GM12878 (cell line): ENCODE measurements at regions of chr9 and their contacts with region 1.

Region 1: DNA sequence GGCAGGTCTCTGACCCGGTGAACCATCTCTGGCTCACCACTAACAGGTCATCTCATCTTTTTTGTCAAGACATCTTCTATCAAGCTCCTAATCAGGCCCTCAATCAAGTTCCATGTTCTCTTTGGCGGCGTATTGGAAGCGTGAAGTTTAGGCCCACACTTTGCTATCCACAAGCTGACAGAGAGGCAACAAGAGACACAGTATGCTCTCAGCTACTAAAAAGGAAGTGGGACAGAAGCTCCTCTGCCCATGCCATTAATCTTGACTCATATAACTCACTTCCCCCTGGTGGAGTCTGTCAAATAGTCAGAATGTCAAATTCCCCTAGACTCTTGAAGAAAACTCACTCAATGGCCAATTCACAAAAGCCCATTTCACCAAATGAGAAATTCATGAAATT is 77.6 kb upstream of the TMC1 start:
- DNase-seq: peak; percentile 85
- ATAC-seq: peak; percentile 97
- H3K4me3 ChIP-seq: no peak overlapping the region
- H3K27ac ChIP-seq: peak overlapping the region; percentile 79; the same call in 1 of the 2 replicates
- H3K4me1 ChIP-seq: peaks cover 15% of the 10 kb centered on the region
- H3K27me3 ChIP-seq: no peaks in the 10 kb centered on the region
- CTCF ChIP-seq: peak in 1 of 3 experiments; percentile 21; a peak in 2 of 6 replicates
- EP300 ChIP-seq: peak; percentile 61 to 88
- POLR2A ChIP-seq: no peak
- RAD21 ChIP-seq: peak; percentile 49

Region 2: DNA sequence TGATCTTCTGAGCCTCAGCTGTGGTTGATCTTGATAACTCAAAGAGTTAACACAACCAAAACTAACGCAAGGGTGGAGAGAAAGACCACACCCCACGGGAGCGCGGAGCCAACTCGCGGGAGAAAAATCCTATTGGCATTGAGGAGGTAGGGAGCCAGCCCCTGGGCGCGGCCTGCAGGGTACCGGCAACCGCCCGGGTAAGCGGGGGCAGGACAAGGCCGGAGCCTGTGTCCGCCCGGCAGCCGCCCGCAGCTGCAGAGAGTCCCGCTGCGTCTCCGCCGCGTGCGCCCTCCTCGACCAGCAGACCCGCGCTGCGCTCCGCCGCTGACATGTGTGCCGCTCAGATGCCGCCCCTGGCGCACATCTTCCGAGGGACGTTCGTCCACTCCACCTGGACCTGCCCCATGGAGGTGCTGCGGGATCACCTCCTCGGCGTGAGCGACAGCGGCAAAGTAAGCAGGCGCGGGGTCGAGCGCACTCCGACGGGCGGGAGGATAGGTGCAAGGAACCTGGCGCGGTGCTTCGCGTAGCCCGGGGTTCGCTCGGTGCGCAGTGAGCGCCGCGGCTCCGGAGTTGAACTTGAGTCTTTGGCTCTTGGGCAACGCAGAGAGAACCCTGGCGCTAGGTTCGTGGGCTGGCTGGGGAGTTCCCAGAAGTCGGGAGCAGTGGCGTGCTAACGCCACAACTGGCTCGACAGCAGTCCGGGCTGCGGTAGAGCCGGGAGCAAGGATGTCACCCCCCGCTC is 294.5 kb before region 1 on chr9 and contains the start of gene GDA:
- CTCF ChIA-PET with region 1: no interaction called
- POLR2A ChIA-PET with region 1: no interaction called
- RAD21 ChIA-PET with region 1: no interaction called
- SMC1A ChIA-PET with region 1: no interaction called
- in situ Hi-C with region 1: no loop called
- intact Hi-C with region 1: no loop called
- DNase-seq: no peak
- ATAC-seq: peak; percentile 41
- H3K4me3 ChIP-seq: no peak within 1 kb of the TSS
- H3K27ac ChIP-seq: no peak within 1 kb of the TSS
- H3K4me1 ChIP-seq: no peaks in the 10 kb centered on the region; the same call in 1 of the 2 replicates
- H3K27me3 ChIP-seq: peaks cover 2 to 3% of the 10 kb centered on the region in 2 experiments; a peak in 2 of 4 replicates
- CTCF ChIP-seq: no peak
- EP300 ChIP-seq: no peak
- POLR2A ChIP-seq: no peak
- RAD21 ChIP-seq: no peak
- polyA plus RNA-seq, gene GDA: 0.23 to 0.49 TPM

Region 3: DNA sequence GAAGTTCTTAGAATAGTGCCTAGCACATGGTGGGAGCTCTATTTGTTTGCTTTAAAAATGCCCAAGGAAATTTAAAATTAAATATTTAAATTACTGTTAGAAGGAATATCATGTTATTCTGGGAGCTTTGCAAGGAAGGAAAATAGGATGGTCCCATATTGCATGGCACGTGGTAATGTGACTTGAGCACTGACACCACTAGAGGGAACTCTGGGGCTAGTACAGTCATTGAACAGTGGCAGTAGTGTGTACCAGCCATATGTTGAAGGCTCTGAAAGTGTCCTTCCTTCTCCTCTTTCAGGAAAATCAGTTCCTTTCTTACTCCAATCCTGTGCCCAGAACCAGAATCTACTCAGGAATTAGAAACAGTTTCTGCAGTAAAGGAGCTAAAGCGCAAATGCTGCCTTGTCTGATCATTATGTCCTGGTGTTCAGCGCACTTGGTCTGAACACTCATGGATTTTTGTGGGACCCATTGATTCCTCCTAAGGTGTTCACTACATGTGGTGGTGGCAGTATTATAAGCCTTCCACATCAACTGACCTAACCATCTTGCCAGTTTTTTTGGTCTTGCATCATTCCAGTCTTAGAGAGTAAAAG is 240.6 kb before region 1 on chr9:
- CTCF ChIA-PET with region 1: no interaction called
- POLR2A ChIA-PET with region 1: no interaction called
- RAD21 ChIA-PET with region 1: interaction called, 6 read pairs
- SMC1A ChIA-PET with region 1: no interaction called
- in situ Hi-C with region 1: no loop called
- intact Hi-C with region 1: loop called (anchors 10 kb)
- DNase-seq: no peak
- ATAC-seq: peak; percentile 76
- H3K4me3 ChIP-seq: no peak overlapping the region
- H3K27ac ChIP-seq: no peak overlapping the region
- H3K4me1 ChIP-seq: peaks cover 4% of the 10 kb centered on the region
- H3K27me3 ChIP-seq: no peaks in the 10 kb centered on the region
- CTCF ChIP-seq: peak; percentile 62 to 71 (median 71)
- EP300 ChIP-seq: no peak
- POLR2A ChIP-seq: no peak
- RAD21 ChIP-seq: peak; percentile 51

Region 4: DNA sequence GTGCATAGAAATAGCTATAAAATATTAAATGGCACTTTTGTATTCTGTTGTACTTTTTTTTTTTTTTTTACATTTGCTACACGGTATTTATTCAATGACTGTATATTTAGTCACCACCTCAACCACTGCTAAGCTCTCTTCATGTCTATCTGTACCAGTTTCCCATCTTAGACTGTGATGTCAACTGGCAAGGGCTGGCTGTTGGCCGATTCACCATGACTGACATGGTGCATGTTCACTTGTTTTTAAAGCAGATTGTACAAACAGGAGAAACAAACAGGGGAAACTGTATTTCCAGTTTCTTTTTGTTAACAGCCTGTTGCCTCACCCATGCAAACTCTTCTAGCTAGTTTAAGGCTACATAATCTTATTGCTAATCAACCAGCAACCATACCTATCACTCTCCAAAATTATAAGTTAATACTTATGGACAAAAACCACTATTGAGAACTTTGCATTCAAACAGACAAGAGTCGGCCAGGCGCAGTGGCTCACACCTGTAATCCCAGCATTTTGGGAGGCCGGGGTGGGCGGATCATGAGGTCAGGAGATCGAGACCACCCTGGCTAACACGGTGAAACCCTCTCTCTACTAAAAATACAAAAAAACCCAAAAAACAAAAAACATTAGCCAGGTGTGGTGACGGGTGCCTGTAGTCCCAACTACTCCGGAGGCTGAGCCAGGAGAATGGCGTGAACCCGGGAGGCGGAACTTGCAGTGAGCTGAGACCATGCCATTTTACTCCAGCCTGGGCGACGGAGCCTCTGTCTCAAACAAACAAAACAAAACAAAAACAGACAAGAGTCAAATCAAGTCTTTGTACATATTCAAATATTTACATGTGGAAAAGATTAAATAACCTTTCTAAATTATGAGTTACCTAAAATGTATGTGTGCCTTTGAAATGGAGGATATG is 92.1 kb before region 1 on chr9:
- CTCF ChIA-PET with region 1: no interaction called
- POLR2A ChIA-PET with region 1: no interaction called
- RAD21 ChIA-PET with region 1: no interaction called
- SMC1A ChIA-PET with region 1: no interaction called
- in situ Hi-C with region 1: no loop called
- intact Hi-C with region 1: no loop called
- DNase-seq: no peak
- ATAC-seq: 0 out of 3 replicates have a peak, but pooled peaks have one; percentile 10
- H3K4me3 ChIP-seq: no peak overlapping the region
- H3K27ac ChIP-seq: no peak overlapping the region
- H3K4me1 ChIP-seq: no peaks in the 10 kb centered on the region
- H3K27me3 ChIP-seq: no peaks in the 10 kb centered on the region
- CTCF ChIP-seq: no peak
- EP300 ChIP-seq: no peak
- POLR2A ChIP-seq: no peak
- RAD21 ChIP-seq: no peak

Region 5: GRCh38 chr9:72364679-72365524 is 79.0 kb before region 1 on chr9 and contains the start of gene ZFAND5:
- CTCF ChIA-PET with region 1: interaction called, 9 read pairs
- POLR2A ChIA-PET with region 1: interaction called, 8 read pairs
- RAD21 ChIA-PET with region 1: interaction called, 14 read pairs
- SMC1A ChIA-PET with region 1: interaction called, 7 read pairs
- in situ Hi-C with region 1: no loop called
- intact Hi-C with region 1: loop called (anchors 1 kb)
- DNase-seq: peak; percentile 57
- ATAC-seq: peak; percentile 88
- H3K4me3 ChIP-seq: peak within 1 kb of the TSS; percentile 91
- H3K27ac ChIP-seq: peak within 1 kb of the TSS; percentile 80
- H3K4me1 ChIP-seq: peaks cover 4% of the 10 kb centered on the region
- H3K27me3 ChIP-seq: no peaks in the 10 kb centered on the region
- CTCF ChIP-seq: peak in 1 of 3 experiments; percentile 27; a peak in 1 of 6 replicates
- EP300 ChIP-seq: peak in 1 of 2 experiments; percentile 44; a peak in 2 of 4 replicates
- POLR2A ChIP-seq: peak; percentile 97
- RAD21 ChIP-seq: peak; percentile 20; the same call in 1 of the 2 replicates
- polyA plus RNA-seq, gene ZFAND5: 22.5 to 32.3 TPM

Region 6: DNA sequence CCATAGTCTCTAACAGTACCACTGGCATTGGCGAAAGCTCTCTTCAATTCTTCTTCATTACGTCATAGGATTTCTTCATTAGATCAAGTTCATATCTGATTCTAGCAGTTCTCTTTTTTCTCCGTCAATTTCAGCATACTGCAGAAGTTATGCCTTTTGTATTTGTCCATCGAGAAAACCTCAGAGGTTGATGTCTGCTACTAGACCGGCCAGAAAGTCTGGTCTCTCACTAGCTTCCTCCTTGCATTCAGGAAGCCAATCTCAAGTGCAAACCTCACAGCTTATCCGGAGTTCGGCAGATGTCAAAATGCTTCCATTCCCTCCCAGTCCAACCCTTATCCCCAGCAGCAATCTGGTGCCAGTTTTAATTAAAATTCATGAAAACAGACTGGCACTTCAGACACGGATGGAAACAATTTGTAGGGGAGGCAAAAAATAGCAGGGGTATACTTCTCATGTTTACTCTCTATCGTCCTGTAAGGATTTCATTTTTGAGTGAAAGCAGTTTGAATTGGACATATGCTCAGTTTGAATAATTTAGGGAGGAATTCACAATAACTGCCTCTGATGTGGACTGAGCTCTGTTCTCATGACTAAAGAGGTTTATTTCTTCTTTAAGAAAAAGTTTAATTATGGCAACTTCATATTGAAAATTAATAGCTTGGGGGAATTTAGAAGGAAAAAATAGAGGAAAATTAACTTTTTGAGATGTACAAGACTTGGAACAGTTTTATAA is 21.2 kb after region 1 on chr9:
- CTCF ChIA-PET with region 1: interaction called, 46 read pairs
- POLR2A ChIA-PET with region 1: interaction called, 8 read pairs
- RAD21 ChIA-PET with region 1: interaction called, 43 read pairs
- SMC1A ChIA-PET with region 1: interaction called, 73 read pairs
- in situ Hi-C with region 1: no loop called
- intact Hi-C with region 1: no loop called
- DNase-seq: no peak
- ATAC-seq: peak; percentile 21; the same call in 2 of the 3 replicates
- H3K4me3 ChIP-seq: no peak overlapping the region
- H3K27ac ChIP-seq: no peak overlapping the region
- H3K4me1 ChIP-seq: no peaks in the 10 kb centered on the region
- H3K27me3 ChIP-seq: no peaks in the 10 kb centered on the region
- CTCF ChIP-seq: no peak
- EP300 ChIP-seq: no peak
- POLR2A ChIP-seq: no peak
- RAD21 ChIP-seq: no peak

Region 7: DNA sequence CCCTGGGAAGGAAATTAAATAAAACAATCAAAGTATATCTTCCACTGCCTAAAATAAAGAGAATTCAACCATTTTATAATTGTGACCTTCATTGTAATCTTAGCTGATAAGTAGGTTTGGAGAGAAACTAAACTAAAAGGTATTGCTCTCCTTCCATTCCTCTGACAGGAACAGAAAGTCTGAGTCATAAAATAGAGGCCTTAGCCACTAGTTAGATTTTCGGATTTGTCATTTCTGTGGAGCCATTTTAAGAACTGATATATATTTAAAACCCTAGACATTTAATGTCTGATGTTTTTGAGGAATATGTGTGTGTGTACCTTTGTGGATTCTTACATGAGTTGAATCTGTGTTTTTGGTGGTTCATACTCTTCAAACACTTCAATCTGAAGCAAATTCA is 65.8 kb after region 1 on chr9:
- CTCF ChIA-PET with region 1: interaction called, 5 read pairs
- POLR2A ChIA-PET with region 1: interaction called, 5 read pairs
- RAD21 ChIA-PET with region 1: interaction called, 30 read pairs
- SMC1A ChIA-PET with region 1: interaction called, 21 read pairs
- in situ Hi-C with region 1: no loop called
- intact Hi-C with region 1: loop called (anchors 5 kb)
- DNase-seq: peak; percentile 51
- ATAC-seq: peak; percentile 96
- H3K4me3 ChIP-seq: no peak overlapping the region
- H3K27ac ChIP-seq: peak overlapping the region; percentile 88
- H3K4me1 ChIP-seq: peaks cover 14% of the 10 kb centered on the region
- H3K27me3 ChIP-seq: no peaks in the 10 kb centered on the region
- CTCF ChIP-seq: no peak
- EP300 ChIP-seq: peak in 1 of 2 experiments; percentile 45; a peak in 1 of 4 replicates
- POLR2A ChIP-seq: no peak
- RAD21 ChIP-seq: no peak

Region 8: GRCh38 chr9:72592502-72593403 is 148.9 kb after region 1 on chr9:
- CTCF ChIA-PET with region 1: interaction called, 7 read pairs
- POLR2A ChIA-PET with region 1: no interaction called
- RAD21 ChIA-PET with region 1: interaction called, 6 read pairs
- SMC1A ChIA-PET with region 1: interaction called, 6 read pairs
- in situ Hi-C with region 1: no loop called
- intact Hi-C with region 1: loop called (anchors 2 kb)
- DNase-seq: peak; percentile 23
- ATAC-seq: peak; percentile 94
- H3K4me3 ChIP-seq: no peak overlapping the region
- H3K27ac ChIP-seq: no peak overlapping the region
- H3K4me1 ChIP-seq: no peaks in the 10 kb centered on the region
- H3K27me3 ChIP-seq: no peaks in the 10 kb centered on the region
- CTCF ChIP-seq: peak; percentile 64 to 76 (median 69)
- EP300 ChIP-seq: no peak
- POLR2A ChIP-seq: no peak
- RAD21 ChIP-seq: peak; percentile 86